GM12878 (cell line): ENCODE measurements at regions of chr1 and their contacts with region 1.

Region 1: DNA sequence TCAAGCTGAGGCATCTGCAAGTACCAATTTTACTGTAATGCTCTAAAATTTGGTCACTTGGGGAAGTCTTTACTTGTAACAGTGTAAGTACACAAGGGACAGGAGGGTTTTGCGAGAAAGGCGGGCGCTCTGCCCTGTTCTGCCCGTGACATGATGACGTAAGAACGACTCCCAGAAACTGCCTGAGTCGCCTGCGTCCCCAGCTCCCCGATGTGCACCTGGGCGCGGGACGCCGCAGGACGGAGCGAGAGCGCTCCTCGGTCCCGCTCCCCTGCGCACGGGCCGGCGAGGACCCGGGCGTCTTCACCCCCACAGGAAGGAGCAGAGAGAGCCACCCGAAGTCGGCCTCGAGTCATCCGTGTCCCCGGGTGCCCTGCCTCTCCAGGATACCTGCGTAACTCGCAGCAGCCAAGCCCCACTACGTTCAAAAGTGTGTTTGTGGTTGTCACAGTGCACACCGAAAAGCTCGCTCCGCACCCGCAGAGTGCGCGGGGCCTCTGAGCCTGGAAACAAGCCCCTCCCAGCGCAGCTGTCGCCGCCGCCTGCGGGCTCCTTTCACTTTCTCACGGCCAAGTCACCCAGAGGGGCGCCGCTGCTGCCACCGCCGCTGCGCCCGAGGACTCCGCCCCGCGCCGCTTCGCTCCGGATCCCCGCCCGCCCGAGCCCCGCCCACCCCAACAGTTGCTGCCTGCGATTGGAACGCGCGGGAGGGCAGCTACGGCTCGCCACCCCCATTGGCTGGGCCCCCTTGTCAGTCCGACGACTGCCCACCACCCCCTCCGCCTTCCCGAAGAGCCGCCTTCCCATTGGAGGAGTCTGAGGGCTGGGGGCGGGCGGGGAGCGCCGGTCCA is 3.2 kb upstream of the ZBTB18 start:
- DNase-seq: peak; percentile 92
- ATAC-seq: peak; percentile 92
- H3K4me3 ChIP-seq: peak overlapping the region; percentile 75
- H3K27ac ChIP-seq: peak overlapping the region; percentile 67
- H3K4me1 ChIP-seq: peaks cover 20% of the 10 kb centered on the region
- H3K27me3 ChIP-seq: no peaks in the 10 kb centered on the region; a peak in 1 of 4 replicates
- CTCF ChIP-seq: no peak
- EP300 ChIP-seq: peak in 1 of 2 experiments; percentile 32; a peak in 1 of 4 replicates
- POLR2A ChIP-seq: peak; percentile 91
- RAD21 ChIP-seq: no peak

Region 2: DNA sequence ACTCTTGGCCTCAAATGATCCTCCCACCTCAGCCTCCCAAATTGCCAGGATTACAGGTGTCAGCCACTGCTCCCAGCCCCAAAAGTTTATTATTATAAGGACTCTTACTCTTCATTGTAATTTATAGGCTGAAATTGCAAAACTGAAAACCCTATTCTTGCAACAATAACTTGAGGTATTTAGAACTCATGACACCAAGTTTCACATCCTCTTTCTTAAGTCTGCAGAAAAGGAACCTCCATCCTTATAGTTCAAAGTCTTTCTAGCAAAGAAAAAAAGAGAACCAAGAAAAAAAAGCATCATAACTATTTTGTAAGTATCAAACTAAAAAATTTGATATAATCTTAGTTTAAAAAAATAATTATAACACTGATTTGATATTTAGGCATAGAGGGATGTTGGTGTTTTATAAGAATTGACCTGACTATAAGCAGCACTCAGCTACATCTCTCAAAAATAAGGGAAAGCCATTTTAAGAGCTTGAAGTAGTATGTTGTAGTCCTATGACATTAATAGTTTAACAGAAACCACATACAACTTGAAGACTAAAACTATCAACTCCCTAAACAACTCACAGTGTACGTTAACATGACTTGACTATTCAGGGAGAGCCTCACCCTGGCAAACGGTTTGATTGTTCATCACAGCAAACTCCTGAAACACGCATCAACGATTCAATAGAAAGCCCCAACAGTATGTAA is 320.2 kb before region 1 on chr1:
- CTCF ChIA-PET with region 1: no interaction called
- POLR2A ChIA-PET with region 1: interaction called, 4 read pairs
- RAD21 ChIA-PET with region 1: no interaction called
- SMC1A ChIA-PET with region 1: no interaction called
- in situ Hi-C with region 1: no loop called
- intact Hi-C with region 1: loop called (anchors 5 kb)
- DNase-seq: peak; percentile 66
- ATAC-seq: peak; percentile 90
- H3K4me3 ChIP-seq: peak overlapping the region; percentile 29; the same call in 1 of the 2 replicates
- H3K27ac ChIP-seq: peak overlapping the region; percentile 74
- H3K4me1 ChIP-seq: peaks cover 42% of the 10 kb centered on the region
- H3K27me3 ChIP-seq: no peaks in the 10 kb centered on the region
- CTCF ChIP-seq: no peak
- EP300 ChIP-seq: peak; percentile 74 to 78; a peak in 3 of 4 replicates
- POLR2A ChIP-seq: no peak
- RAD21 ChIP-seq: no peak

Region 3: DNA sequence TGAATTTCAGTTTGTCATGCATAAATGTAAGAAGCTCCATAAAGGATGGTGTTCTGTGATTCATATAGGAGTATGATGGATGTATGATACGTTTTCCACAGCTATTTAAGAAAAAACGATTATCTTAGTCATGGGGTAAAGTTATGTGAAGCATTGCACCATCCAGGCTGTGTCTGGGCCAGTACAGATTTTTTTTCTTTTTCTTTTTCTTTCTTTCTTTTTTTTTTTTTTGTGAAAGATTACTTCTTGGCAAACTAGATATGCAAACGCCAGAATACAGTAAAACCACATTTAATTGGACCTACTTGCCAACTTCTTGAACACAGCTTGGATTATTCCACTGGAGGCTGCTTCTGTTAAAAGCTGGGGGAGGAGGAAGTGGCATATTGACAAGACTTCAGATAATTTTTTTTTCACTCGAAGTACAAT is 18.1 kb after region 1 on chr1:
- CTCF ChIA-PET with region 1: interaction called, 5 read pairs
- POLR2A ChIA-PET with region 1: interaction called, 11 read pairs
- RAD21 ChIA-PET with region 1: interaction called, 15 read pairs
- SMC1A ChIA-PET with region 1: interaction called, 45 read pairs
- in situ Hi-C with region 1: no loop called
- intact Hi-C with region 1: no loop called
- DNase-seq: no peak
- ATAC-seq: no peak
- H3K4me3 ChIP-seq: no peak overlapping the region
- H3K27ac ChIP-seq: no peak overlapping the region
- H3K4me1 ChIP-seq: no peaks in the 10 kb centered on the region
- H3K27me3 ChIP-seq: no peaks in the 10 kb centered on the region; a peak in 3 of 4 replicates
- CTCF ChIP-seq: no peak
- EP300 ChIP-seq: no peak
- POLR2A ChIP-seq: no peak
- RAD21 ChIP-seq: no peak

Region 4: GRCh38 chr1:244137725-244138124 is 89.9 kb after region 1 on chr1:
- CTCF ChIA-PET with region 1: no interaction called
- POLR2A ChIA-PET with region 1: no interaction called
- RAD21 ChIA-PET with region 1: no interaction called
- SMC1A ChIA-PET with region 1: no interaction called
- in situ Hi-C with region 1: no loop called
- intact Hi-C with region 1: no loop called
- DNase-seq: no peak
- ATAC-seq: no peak
- H3K4me3 ChIP-seq: no peak overlapping the region; the same call in 1 of the 2 replicates
- H3K27ac ChIP-seq: no peak overlapping the region
- H3K4me1 ChIP-seq: no peaks in the 10 kb centered on the region
- H3K27me3 ChIP-seq: no peaks in the 10 kb centered on the region
- CTCF ChIP-seq: no peak
- EP300 ChIP-seq: no peak
- POLR2A ChIP-seq: no peak
- RAD21 ChIP-seq: no peak

Region 5: GRCh38 chr1:244272471-244273261 is 224.8 kb after region 1 on chr1:
- CTCF ChIA-PET with region 1: no interaction called
- POLR2A ChIA-PET with region 1: no interaction called
- RAD21 ChIA-PET with region 1: interaction called, 3 read pairs
- SMC1A ChIA-PET with region 1: interaction called, 3 read pairs
- in situ Hi-C with region 1: no loop called
- intact Hi-C with region 1: loop called (anchors 10 kb)
- DNase-seq: peak; percentile 69
- ATAC-seq: peak; percentile 94
- H3K4me3 ChIP-seq: no peak overlapping the region
- H3K27ac ChIP-seq: no peak overlapping the region
- H3K4me1 ChIP-seq: no peaks in the 10 kb centered on the region
- H3K27me3 ChIP-seq: no peaks in the 10 kb centered on the region
- CTCF ChIP-seq: peak; percentile 88 to 99 (median 99); a peak in 5 of 6 replicates
- EP300 ChIP-seq: no peak
- POLR2A ChIP-seq: no peak
- RAD21 ChIP-seq: peak; percentile 100

Region 6: DNA sequence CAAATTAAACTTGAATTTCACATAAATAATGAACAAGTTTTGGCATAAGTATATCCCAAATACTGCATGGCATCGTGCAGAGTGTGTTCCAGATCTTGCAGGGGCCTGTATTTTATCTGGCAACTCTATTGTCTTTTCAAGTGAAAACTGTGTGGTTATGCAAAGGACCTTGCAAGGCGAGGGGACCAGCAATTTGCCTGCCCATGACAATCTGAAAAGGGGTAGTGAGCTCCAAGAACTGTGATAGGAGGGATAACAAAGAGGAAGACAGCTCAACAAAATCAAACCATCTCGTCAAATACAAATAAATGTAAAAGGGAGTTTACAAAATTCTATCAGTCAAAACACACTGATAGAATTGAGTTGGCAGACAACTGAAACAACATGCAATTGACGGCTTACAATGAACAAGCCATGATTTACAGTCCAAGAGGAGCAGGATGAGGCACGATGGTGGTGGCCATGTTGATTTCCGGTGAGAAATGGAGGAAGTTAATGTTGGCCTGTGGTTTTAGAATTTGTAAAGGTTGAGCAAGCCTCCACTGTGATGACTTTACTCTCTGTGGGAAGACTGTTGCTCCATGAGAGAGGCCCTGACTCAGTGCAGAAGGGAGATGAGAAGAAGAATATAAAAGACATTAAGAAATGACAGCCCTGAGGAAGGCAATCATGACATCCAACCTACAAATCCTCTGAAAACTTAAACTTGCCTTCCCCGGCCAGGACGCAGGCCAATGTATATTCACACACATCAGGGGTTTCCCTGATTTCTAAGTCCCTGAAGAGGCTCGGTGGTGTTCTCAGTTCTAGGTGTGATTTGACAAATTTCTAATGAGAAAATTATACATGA is 271.7 kb after region 1 on chr1:
- CTCF ChIA-PET with region 1: no interaction called
- POLR2A ChIA-PET with region 1: no interaction called
- RAD21 ChIA-PET with region 1: no interaction called
- SMC1A ChIA-PET with region 1: no interaction called
- in situ Hi-C with region 1: no loop called
- intact Hi-C with region 1: loop called (anchors 2 kb)
- DNase-seq: peak; percentile 84
- ATAC-seq: peak; percentile 85
- H3K4me3 ChIP-seq: peak overlapping the region; percentile 20; the same call in 1 of the 2 replicates
- H3K27ac ChIP-seq: peak overlapping the region; percentile 94
- H3K4me1 ChIP-seq: peaks cover 24% of the 10 kb centered on the region
- H3K27me3 ChIP-seq: no peaks in the 10 kb centered on the region
- CTCF ChIP-seq: no peak
- EP300 ChIP-seq: peak; percentile 59 to 62; a peak in 2 of 4 replicates
- POLR2A ChIP-seq: no peak
- RAD21 ChIP-seq: no peak